ENCODE measurements at regions of chr3 and their contacts with region 1.

Region 1: DNA sequence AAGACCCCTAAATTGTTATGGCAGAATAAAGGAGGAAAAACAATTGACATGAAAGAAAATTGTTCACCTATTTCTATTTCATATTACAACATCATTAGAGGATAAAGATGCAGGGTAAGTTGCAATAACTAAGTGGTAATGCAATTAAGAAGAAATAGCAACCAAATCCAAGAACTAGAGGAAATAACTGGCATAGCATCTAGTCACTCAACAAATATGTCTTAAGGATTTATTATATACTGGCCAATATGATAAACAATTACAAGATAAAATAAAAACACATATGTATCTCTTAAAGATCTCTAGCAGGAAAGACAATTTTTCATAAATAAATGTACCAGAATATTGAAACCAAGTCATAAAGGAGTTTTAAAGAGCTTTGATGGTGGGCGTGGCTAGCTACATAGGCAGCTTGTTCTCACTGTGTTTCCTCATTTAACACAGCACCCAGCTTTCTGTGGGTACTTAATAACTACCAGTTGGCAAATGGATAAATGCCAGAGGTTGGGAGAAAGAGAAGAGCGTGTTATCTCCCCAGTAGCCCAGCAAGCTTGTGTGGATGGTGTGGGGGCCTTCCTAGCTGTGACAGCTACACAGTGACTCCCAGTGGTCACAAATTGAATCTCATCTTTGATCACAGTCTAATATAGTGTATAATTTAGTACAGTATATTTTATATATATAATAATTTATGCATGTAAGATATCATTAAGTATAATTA is 983.9 kb downstream of the EPHA3 start:
- DNase-seq: peak; percentile 54
- H3K4me3 Mint-ChIP-seq: no peak overlapping the region
- H3K27ac Mint-ChIP-seq: no peak overlapping the region
- H3K4me1 Mint-ChIP-seq: no peaks in the 10 kb centered on the region
- H3K27me3 Mint-ChIP-seq: no peaks in the 10 kb centered on the region
- CTCF ChIP-seq: peak; percentile 77

Region 2: GRCh38 chr3:88219138-88219792 is 1872.1 kb before region 1 on chr3:
- CTCF ChIA-PET with region 1: interaction called, 22 read pairs
- POLR2A ChIA-PET with region 1: interaction called, 4 read pairs
- intact Hi-C with region 1: loop called (anchors 5 kb)
- DNase-seq: peak; percentile 72
- H3K4me3 Mint-ChIP-seq: no peak overlapping the region
- H3K27ac Mint-ChIP-seq: no peak overlapping the region
- H3K4me1 Mint-ChIP-seq: peaks cover 4% of the 10 kb centered on the region
- H3K27me3 Mint-ChIP-seq: no peaks in the 10 kb centered on the region
- CTCF ChIP-seq: peak; percentile 73

Region 3: GRCh38 chr3:89314454-89315098 is 776.8 kb before region 1 on chr3:
- CTCF ChIA-PET with region 1: interaction called, 18 read pairs
- POLR2A ChIA-PET with region 1: interaction called, 3 read pairs
- intact Hi-C with region 1: loop called (anchors 1 kb)
- DNase-seq: peak; percentile 51
- H3K4me3 Mint-ChIP-seq: no peak overlapping the region
- H3K27ac Mint-ChIP-seq: no peak overlapping the region
- H3K4me1 Mint-ChIP-seq: no peaks in the 10 kb centered on the region
- H3K27me3 Mint-ChIP-seq: peaks cover 51% of the 10 kb centered on the region
- CTCF ChIP-seq: peak; percentile 21

Region 4: GRCh38 chr3:89586256-89586655 is 505.1 kb before region 1 on chr3:
- CTCF ChIA-PET with region 1: no interaction called
- POLR2A ChIA-PET with region 1: no interaction called
- intact Hi-C with region 1: no loop called
- DNase-seq: no peak
- H3K4me3 Mint-ChIP-seq: no peak overlapping the region
- H3K27ac Mint-ChIP-seq: no peak overlapping the region
- H3K4me1 Mint-ChIP-seq: no peaks in the 10 kb centered on the region
- H3K27me3 Mint-ChIP-seq: no peaks in the 10 kb centered on the region
- CTCF ChIP-seq: no peak

Region 5: DNA sequence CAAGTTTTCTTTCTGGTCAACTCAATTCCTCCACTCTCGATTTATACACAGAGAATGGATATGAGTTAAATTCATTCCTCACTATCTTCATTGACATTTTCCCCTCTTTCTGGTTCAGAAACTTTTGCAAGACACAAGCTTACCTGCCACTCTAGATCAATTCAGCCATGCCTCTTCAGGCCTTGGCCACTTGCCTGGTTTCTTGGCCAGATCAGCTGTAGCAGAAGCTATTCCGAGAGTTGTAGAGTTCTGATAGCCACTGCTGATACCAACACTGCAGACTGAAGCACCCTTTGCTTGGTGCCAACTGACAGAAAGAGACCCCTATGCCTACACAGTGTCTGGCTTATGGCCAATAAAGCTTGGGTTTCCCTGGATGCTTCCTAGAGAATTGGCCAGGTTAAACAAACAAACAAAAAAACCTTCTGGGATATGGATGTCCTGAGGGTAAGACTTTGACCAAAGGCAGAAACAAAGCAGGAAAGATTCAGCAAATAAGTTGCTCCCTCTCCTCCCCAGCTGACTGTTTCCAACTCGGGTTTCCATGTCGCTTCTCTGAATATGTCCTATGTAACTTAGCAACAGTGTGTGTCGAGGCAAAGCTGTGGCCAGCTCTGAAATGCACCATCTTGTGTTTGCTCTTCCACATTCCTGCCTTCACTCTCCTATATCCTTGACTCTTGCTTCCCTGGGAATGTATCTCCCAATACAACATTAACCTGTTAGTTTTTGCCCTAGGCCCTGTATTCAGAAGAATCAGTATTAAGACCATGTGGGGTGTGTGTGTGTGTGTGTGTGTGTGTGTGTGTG is 462.3 kb before region 1 on chr3:
- CTCF ChIA-PET with region 1: no interaction called
- POLR2A ChIA-PET with region 1: no interaction called
- intact Hi-C with region 1: loop called (anchors 1 kb)
- DNase-seq: no peak
- H3K4me3 Mint-ChIP-seq: no peak overlapping the region
- H3K27ac Mint-ChIP-seq: no peak overlapping the region
- H3K4me1 Mint-ChIP-seq: no peaks in the 10 kb centered on the region
- H3K27me3 Mint-ChIP-seq: no peaks in the 10 kb centered on the region
- CTCF ChIP-seq: no peak

Region 6: GRCh38 chr3:89947337-89947954 is 143.9 kb before region 1 on chr3:
- CTCF ChIA-PET with region 1: interaction called, 6 read pairs
- POLR2A ChIA-PET with region 1: no interaction called
- intact Hi-C with region 1: loop called (anchors 1 kb)
- DNase-seq: peak; percentile 25
- H3K4me3 Mint-ChIP-seq: no peak overlapping the region
- H3K27ac Mint-ChIP-seq: peak overlapping the region; percentile 51
- H3K4me1 Mint-ChIP-seq: peaks cover 11% of the 10 kb centered on the region
- H3K27me3 Mint-ChIP-seq: no peaks in the 10 kb centered on the region
- CTCF ChIP-seq: no peak